A673 (cell line): ENCODE measurements at regions of chr12 and their contacts with region 1.

Region 1: GRCh38 chr12:13962699-13963098 is 18.7 kb downstream of the GRIN2B start:
- DNase-seq: peak; percentile 57
- H3K4me3 ChIP-seq: no peak overlapping the region
- H3K27ac ChIP-seq: no peak overlapping the region
- H3K4me1 ChIP-seq: no peaks in the 10 kb centered on the region
- H3K27me3 ChIP-seq: peaks cover 94% of the 10 kb centered on the region
- CTCF ChIP-seq: peak; percentile 66

Region 2: GRCh38 chr12:13734584-13735152 is 228.0 kb before region 1 on chr12:
- CTCF ChIA-PET with region 1: no interaction called
- POLR2A ChIA-PET with region 1: no interaction called
- intact Hi-C with region 1: loop called (anchors 10 kb)
- DNase-seq: no peak
- H3K4me3 ChIP-seq: no peak overlapping the region
- H3K27ac ChIP-seq: no peak overlapping the region
- H3K4me1 ChIP-seq: no peaks in the 10 kb centered on the region
- H3K27me3 ChIP-seq: no peaks in the 10 kb centered on the region
- CTCF ChIP-seq: no peak